ENCODE measurements at regions of chr6 and their contacts with region 1.

Region 1: DNA sequence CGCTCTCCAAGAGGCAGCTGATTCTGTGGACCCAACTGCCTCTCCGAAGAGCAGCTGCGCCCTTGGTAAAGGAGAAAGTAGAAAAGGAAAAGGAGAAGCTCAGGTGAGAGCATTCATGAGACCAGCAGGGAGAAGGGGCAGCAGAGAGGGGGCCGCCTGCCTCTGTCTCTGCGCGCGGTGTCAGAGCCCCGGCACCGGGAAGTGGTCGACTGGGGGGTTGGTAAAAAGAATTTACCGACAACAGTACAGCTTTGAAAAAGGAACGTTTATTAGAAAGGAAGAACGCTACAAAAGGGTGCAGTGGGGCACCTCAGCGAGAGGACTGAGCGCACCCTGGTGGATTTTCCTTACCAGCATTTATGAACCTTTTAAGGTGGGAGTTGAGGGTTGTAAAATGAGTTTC is 61.9 kb downstream of the GPR6 start:
- DNase-seq: peak; percentile 17 to 36
- H3K4me3 ChIP-seq: peak overlapping the region in 1 of 3 donors; percentile 6
- H3K27ac ChIP-seq: no peak overlapping the region
- H3K4me1 ChIP-seq: no peaks in the 10 kb centered on the region
- H3K27me3 ChIP-seq: no peaks in the 10 kb centered on the region
- CTCF ChIP-seq: peak in 3 of 6 experiments; percentile 42 to 44 (median 44)
- POLR2A ChIP-seq: no peak

Region 2: GRCh38 chr6:109526905-109527628 is 512.9 kb before region 1 on chr6:
- intact Hi-C with region 1: loop called (anchors 10 kb)
- DNase-seq: peak; percentile 30 to 40
- H3K4me3 ChIP-seq: no peak overlapping the region
- H3K27ac ChIP-seq: no peak overlapping the region
- H3K4me1 ChIP-seq: no peaks in the 10 kb centered on the region
- H3K27me3 ChIP-seq: no peaks in the 10 kb centered on the region
- CTCF ChIP-seq: peak in 4 of 6 experiments; percentile 42 to 62 (median 52)
- POLR2A ChIP-seq: no peak

Region 3: GRCh38 chr6:109705258-109705657 is 334.7 kb before region 1 on chr6:
- intact Hi-C with region 1: loop called (anchors 2 kb)
- DNase-seq: peak; percentile 79 to 82
- H3K4me3 ChIP-seq: no peak overlapping the region
- H3K27ac ChIP-seq: no peak overlapping the region
- H3K4me1 ChIP-seq: no peaks in the 10 kb centered on the region
- H3K27me3 ChIP-seq: no peaks in the 10 kb centered on the region
- CTCF ChIP-seq: peak; percentile 89 to 100 (median 94)
- POLR2A ChIP-seq: no peak

Region 4: GRCh38 chr6:109998159-109998785 is 41.7 kb before region 1 on chr6:
- intact Hi-C with region 1: no loop called
- DNase-seq: no peak
- H3K4me3 ChIP-seq: no peak overlapping the region
- H3K27ac ChIP-seq: no peak overlapping the region
- H3K4me1 ChIP-seq: no peaks in the 10 kb centered on the region
- H3K27me3 ChIP-seq: no peaks in the 10 kb centered on the region
- CTCF ChIP-seq: no peak
- POLR2A ChIP-seq: no peak

Region 5: DNA sequence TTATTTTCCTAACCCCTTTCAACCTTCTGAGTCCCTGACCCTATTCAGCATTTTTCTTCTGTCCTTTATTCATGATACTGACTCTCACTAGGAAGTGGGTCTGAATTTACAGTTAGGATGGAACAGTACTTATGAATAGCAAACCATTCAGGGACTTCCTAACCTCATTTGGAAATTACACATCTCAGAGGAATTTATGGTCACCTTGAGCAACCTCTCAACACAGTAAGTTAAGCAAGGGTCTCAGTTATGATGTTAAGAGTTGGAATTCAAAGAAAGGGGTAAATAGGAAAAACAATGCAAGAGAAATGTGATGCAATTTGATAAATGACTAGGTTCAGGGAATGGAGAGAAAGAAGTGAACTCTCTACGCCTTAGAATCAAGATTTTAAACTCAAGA is 35.4 kb after region 1 on chr6:
- intact Hi-C with region 1: no loop called
- DNase-seq: no peak
- H3K4me3 ChIP-seq: no peak overlapping the region
- H3K27ac ChIP-seq: no peak overlapping the region
- H3K4me1 ChIP-seq: no peaks in the 10 kb centered on the region
- H3K27me3 ChIP-seq: no peaks in the 10 kb centered on the region
- CTCF ChIP-seq: no peak
- POLR2A ChIP-seq: no peak

Region 6: DNA sequence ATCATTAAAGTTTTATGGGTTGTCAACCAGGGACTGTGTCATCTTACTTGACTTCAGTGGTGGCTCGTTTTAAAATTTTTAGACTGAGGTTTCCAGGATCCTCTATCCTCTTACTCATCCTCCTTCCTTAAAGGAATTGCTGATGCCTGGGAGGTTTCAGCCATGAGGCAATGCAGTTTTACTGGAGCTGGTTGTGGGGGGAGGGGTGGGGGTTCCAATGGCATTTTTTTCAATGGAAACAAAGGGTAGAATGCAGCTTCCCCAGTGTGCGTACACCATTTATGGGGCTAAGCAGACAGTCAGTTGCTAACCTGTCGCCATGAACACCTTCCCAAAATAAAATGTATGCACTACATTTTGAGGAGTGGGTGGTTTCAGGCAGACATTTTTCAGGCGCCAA is 230.2 kb after region 1 on chr6:
- intact Hi-C with region 1: no loop called
- DNase-seq: no peak
- H3K4me3 ChIP-seq: no peak overlapping the region
- H3K27ac ChIP-seq: no peak overlapping the region
- H3K4me1 ChIP-seq: no peaks in the 10 kb centered on the region
- H3K27me3 ChIP-seq: no peaks in the 10 kb centered on the region
- CTCF ChIP-seq: no peak
- POLR2A ChIP-seq: no peak

Region 7: GRCh38 chr6:110398778-110399177 is 358.8 kb after region 1 on chr6:
- intact Hi-C with region 1: loop called (anchors 10 kb)
- DNase-seq: no peak
- H3K4me3 ChIP-seq: no peak overlapping the region
- H3K27ac ChIP-seq: no peak overlapping the region
- H3K4me1 ChIP-seq: no peaks in the 10 kb centered on the region
- H3K27me3 ChIP-seq: no peaks in the 10 kb centered on the region
- CTCF ChIP-seq: no peak
- POLR2A ChIP-seq: no peak

Measured in thyroid gland (tissue), 4 donors.